ENCODE measurements at regions of chr20 and their contacts with region 1.

Region 1: DNA sequence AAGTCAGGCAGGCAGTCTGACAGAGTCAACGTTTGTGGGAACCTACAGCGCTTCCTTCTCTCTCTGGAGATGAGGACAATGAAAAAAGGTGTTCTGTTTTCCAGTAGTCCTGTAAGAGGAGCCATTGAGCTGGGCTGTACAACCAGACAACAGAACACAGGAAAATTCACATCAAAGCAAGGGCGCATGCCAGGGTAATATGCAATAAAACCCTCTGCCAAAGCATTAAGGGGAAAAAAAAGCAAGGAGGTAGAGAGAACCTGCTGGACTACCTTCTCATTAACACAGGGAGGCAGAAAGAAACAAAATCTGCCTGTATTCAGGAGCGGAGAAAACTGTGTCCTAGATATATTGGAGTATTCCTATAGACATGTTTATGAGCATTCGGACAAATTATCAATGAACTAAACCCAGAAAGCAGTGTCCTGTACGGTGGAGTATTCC is 1.3 kb downstream of the RNF24 start:
- DNase-seq: peak in 5 of 9 experiments; percentile 19 to 65 (median 34)
- ATAC-seq: no peak
- H3K4me3 ChIP-seq: peak overlapping the region in 1 of 2 experiments; percentile 3
- H3K4me3 Mint-ChIP-seq: peak overlapping the region; percentile 88
- H3K27ac ChIP-seq: peak overlapping the region in 1 of 2 experiments; percentile 23
- H3K27ac Mint-ChIP-seq: peak overlapping the region; percentile 4
- H3K4me1 ChIP-seq: peaks cover 17% of the 10 kb centered on the region
- H3K4me1 Mint-ChIP-seq: peaks cover 34% of the 10 kb centered on the region
- H3K27me3 ChIP-seq: no peaks in the 10 kb centered on the region
- H3K27me3 Mint-ChIP-seq: no peaks in the 10 kb centered on the region
- CTCF ChIP-seq: peak; percentile 35

Region 2: DNA sequence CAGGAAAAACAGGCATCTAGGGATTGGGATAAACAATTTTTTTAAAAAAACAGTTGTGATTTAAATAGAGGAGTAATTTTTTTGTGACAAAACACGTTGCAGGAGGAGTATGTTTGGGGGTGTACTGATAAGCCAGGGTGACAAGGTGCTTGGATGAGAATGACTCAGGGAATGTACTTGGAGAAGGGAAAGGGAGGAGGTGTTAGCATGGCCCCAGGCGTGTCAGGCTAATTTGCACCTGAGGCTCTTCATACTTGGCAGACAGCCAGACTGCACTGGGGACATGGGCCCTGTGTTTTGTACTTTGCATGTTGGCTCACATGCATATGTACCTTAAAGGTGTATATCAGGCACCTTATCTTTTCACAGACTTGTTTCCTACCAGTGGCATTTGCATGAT is 102.1 kb before region 1 on chr20:
- CTCF ChIA-PET with region 1: no interaction called
- POLR2A ChIA-PET with region 1: no interaction called
- intact Hi-C with region 1: no loop called
- DNase-seq: no peak
- ATAC-seq: no peak
- H3K4me3 ChIP-seq: no peak overlapping the region
- H3K4me3 Mint-ChIP-seq: no peak overlapping the region
- H3K27ac ChIP-seq: no peak overlapping the region
- H3K27ac Mint-ChIP-seq: no peak overlapping the region
- H3K4me1 ChIP-seq: peaks cover 16% of the 10 kb centered on the region
- H3K4me1 Mint-ChIP-seq: peaks cover 52% of the 10 kb centered on the region
- H3K27me3 ChIP-seq: no peaks in the 10 kb centered on the region
- H3K27me3 Mint-ChIP-seq: no peaks in the 10 kb centered on the region
- CTCF ChIP-seq: no peak

Region 3: GRCh38 chr20:3927486-3928291 is 86.4 kb before region 1 on chr20:
- CTCF ChIA-PET with region 1: no interaction called
- POLR2A ChIA-PET with region 1: interaction called, 3 read pairs
- intact Hi-C with region 1: loop called in 1 of 2 experiments (anchors 5 kb)
- DNase-seq: no peak
- ATAC-seq: no peak
- H3K4me3 ChIP-seq: no peak overlapping the region
- H3K4me3 Mint-ChIP-seq: no peak overlapping the region
- H3K27ac ChIP-seq: peak overlapping the region in 1 of 2 experiments; percentile 2
- H3K27ac Mint-ChIP-seq: peak overlapping the region; percentile 20
- H3K4me1 ChIP-seq: peaks cover 12% of the 10 kb centered on the region
- H3K4me1 Mint-ChIP-seq: peaks cover 55% of the 10 kb centered on the region
- H3K27me3 ChIP-seq: no peaks in the 10 kb centered on the region
- H3K27me3 Mint-ChIP-seq: no peaks in the 10 kb centered on the region
- CTCF ChIP-seq: no peak

Region 4: GRCh38 chr20:3993109-3993508 is 20.9 kb before region 1 on chr20:
- CTCF ChIA-PET with region 1: interaction called, 3 read pairs
- POLR2A ChIA-PET with region 1: no interaction called
- intact Hi-C with region 1: loop called in 1 of 2 experiments (anchors 1 kb)
- DNase-seq: peak in 1 of 9 experiments; percentile 22
- ATAC-seq: no peak
- H3K4me3 ChIP-seq: no peak overlapping the region
- H3K4me3 Mint-ChIP-seq: no peak overlapping the region
- H3K27ac ChIP-seq: no peak overlapping the region
- H3K27ac Mint-ChIP-seq: peak overlapping the region; percentile 18
- H3K4me1 ChIP-seq: peaks cover 35% of the 10 kb centered on the region
- H3K4me1 Mint-ChIP-seq: peaks cover 53% of the 10 kb centered on the region
- H3K27me3 ChIP-seq: no peaks in the 10 kb centered on the region
- H3K27me3 Mint-ChIP-seq: no peaks in the 10 kb centered on the region
- CTCF ChIP-seq: no peak

Region 5: DNA sequence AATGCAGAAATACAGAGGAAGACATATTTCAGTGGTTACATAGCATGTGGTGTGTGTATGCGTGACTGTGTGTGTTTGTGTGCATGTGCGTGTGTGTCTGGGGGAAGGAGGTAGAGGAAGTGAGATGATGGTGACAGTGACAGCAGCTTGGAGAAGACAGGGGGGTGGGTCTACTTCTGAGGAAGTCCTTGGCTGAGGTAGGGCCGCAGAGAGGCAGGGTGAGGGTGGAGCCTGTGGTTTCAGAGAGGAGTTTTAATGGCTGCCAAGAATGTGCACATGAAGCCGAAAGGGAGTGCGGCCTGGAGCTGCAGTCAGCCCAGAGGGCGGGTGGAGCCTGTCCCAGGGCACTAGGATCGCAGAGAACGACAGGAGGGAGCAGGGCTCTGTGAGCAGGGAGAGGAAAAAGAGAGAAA is 24.0 kb after region 1 on chr20:
- CTCF ChIA-PET with region 1: interaction called, 3 read pairs
- POLR2A ChIA-PET with region 1: interaction called, 6 read pairs
- intact Hi-C with region 1: loop called (anchors 1 to 2 kb)
- DNase-seq: peak; percentile 62 to 94 (median 80)
- ATAC-seq: peak; percentile 100
- H3K4me3 ChIP-seq: peak overlapping the region; percentile 11 to 23
- H3K4me3 Mint-ChIP-seq: peak overlapping the region; percentile 80
- H3K27ac ChIP-seq: peak overlapping the region; percentile 45 to 66
- H3K27ac Mint-ChIP-seq: peak overlapping the region; percentile 97
- H3K4me1 ChIP-seq: peaks cover 20% of the 10 kb centered on the region
- H3K4me1 Mint-ChIP-seq: peaks cover 16% of the 10 kb centered on the region
- H3K27me3 ChIP-seq: no peaks in the 10 kb centered on the region
- H3K27me3 Mint-ChIP-seq: no peaks in the 10 kb centered on the region
- CTCF ChIP-seq: no peak

Measured in CD8-positive, alpha-beta T cell (primary cell).